ENCODE measurements at regions of chr1 and their contacts with region 1.

Region 1: GRCh38 chr1:89262643-89263042 is 10.0 kb downstream of the GBP5 start:
- DNase-seq: no peak
- ATAC-seq: no peak

Region 2: GRCh38 chr1:89081005-89081404 is 181.6 kb before region 1 on chr1:
- intact Hi-C with region 1: no loop called
- DNase-seq: no peak
- ATAC-seq: no peak

Region 3: GRCh38 chr1:89198491-89199072 is 64.1 kb before region 1 on chr1 and contains the start of gene GBP4:
- intact Hi-C with region 1: loop called (anchors 5 kb)
- DNase-seq: peak; percentile 77
- ATAC-seq: peak; percentile 80
- total RNA-seq, gene GBP4: 5.9 TPM

Region 4: DNA sequence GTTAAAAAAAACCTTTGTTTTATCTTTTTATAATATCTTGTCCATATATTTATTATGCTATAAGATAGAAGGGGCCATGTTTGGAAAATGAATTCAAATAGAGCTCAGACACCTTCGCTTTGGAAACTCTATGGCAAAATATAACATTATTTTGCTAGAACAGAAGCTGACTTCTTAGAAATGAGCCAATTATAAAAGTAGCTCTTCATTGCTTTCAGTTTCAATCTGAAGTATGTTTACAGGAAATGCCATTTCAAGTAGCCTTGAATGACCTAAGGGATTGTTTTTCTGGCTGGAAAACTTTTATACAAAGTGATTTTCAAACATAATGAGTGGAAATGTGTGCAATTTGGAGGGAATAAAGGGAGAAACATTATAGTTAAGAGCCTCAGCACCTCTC is 47.9 kb after region 1 on chr1:
- intact Hi-C with region 1: loop called (anchors 5 kb)
- DNase-seq: no peak
- ATAC-seq: no peak

Region 5: GRCh38 chr1:89322402-89322801 is 59.8 kb after region 1 on chr1:
- intact Hi-C with region 1: no loop called
- DNase-seq: no peak
- ATAC-seq: peak; percentile 50